ENCODE measurements at regions of chr5 and their contacts with region 1.

Region 1: GRCh38 chr5:80672140-80672736 is 17.5 kb upstream of the DHFR start:
- DNase-seq: peak; percentile 78
- H3K4me3 ChIP-seq: no peak overlapping the region
- H3K27ac ChIP-seq: no peak overlapping the region
- H3K4me1 ChIP-seq: no peaks in the 10 kb centered on the region
- CTCF ChIP-seq: peak; percentile 91

Region 2: DNA sequence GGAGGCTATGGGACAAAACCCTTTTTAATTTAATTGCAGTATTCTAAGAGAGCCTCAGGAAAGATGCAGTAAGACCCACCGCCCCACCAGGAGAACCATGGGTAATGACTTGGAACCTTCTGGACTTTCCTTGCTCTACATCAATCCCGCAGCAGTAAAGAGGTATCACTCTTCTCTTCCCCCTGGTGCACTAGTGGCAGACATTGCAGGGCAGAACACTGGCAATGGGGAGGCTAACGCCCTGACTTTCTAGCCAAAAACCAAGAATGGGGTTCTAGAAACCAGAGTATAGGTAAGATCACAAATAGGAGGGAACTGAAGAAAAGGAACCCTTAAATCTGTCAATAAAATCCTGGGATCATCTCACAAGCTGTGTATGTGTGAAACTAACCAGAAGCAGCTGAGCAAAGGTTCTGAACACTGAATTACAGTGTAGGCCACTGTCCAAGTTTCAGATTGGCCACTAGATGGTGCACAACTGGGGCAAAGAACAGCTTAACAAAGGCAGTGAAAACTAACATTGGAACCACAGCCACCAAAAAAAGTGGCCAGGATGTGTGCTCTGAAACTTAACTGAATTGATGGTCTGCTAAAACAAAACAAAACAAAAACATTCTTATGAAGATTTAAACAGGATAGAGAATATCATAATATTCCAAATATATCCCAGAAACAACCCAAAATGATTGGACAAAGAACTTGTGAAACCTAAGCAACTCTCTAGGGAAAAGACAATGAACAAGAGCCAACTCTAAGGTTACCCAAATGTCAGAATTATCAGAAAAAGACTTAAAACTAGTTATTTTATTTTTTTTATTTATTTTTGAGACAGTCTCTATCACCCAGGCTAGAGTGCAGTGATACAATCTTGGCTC is 191.0 kb before region 1 on chr5:
- CTCF ChIA-PET with region 1: no interaction called
- POLR2A ChIA-PET with region 1: no interaction called
- intact Hi-C with region 1: loop called (anchors 2 kb)
- DNase-seq: peak; percentile 66
- H3K4me3 ChIP-seq: no peak overlapping the region
- H3K27ac ChIP-seq: no peak overlapping the region
- H3K4me1 ChIP-seq: no peaks in the 10 kb centered on the region
- CTCF ChIP-seq: peak; percentile 97

Region 3: DNA sequence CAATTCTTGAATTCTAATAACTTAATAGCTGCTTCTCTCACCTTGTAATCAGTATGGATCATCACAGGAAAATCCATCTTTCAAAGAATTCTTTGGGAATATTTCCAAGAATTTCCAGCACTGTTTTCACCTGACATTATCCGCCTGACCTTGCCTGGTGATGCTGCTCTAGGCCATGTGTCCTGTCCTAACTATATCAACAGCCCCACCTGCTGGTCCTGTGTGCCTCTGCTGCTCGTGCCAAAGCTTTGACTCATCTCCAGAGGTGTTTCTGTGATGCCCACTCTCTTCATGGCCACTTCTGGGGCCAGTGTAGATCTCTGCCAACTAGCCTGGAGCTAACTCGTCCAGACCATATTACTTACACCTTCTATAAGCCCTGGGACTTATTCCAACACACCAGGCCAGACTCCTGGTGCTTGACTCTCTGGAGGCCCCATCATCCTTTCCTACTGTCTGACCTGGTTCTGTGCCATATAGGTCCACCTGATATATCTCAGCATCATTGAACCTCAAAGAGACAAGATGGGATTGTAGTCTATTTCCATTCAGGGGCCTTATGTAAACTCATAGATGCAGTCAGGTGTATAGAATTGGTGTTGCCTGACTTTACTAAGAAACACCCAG is 493.4 kb after region 1 on chr5:
- CTCF ChIA-PET with region 1: no interaction called
- POLR2A ChIA-PET with region 1: no interaction called
- intact Hi-C with region 1: loop called (anchors 5 kb)
- DNase-seq: peak; percentile 57
- H3K4me3 ChIP-seq: no peak overlapping the region
- H3K27ac ChIP-seq: no peak overlapping the region
- H3K4me1 ChIP-seq: no peaks in the 10 kb centered on the region
- CTCF ChIP-seq: peak; percentile 90